Mammary epithelial cell (primary cell): ENCODE measurements at regions of chr5 and their contacts with region 1.

Region 1: DNA sequence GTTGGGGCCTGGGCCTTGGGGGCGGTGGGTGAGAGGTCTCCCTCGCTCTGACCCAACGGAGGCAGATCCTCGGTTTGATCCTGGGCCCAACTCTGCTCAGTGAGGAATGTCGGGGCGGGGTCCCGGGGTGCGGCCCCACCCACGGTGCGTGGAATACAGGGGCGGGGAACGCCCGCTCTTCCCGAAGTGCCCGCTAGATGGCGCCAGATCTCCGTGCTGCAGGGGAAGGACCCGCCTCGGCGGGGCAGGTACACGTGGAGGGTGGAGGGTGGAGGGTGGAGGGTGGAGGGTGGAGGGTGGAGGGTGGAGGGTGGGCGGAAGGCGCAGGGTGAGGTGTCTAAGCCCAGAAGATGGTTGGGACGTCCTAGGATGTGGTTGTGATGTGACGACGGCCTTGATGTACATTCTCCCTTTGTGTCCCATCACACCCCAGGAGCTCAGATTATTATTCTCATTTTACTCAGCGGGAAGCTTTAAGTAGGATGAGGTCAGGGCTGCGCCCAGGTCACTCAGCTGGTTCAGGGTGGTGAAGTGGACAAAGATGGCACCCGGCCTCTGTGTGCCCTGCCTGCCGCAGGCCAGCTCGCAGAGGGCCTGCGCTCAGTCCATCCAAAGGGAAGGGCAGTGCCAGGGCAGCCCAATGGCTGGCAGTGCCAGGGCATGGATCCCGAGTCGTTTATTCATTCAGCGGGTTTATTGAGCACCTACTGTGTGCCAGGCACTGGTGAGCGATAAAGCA is 9.4 kb upstream of the RPS14 start:
- DNase-seq: peak; percentile 39
- H3K4me3 ChIP-seq: peak overlapping the region in 1 of 3 experiments; percentile 9
- H3K27ac ChIP-seq: no peak overlapping the region
- H3K4me1 ChIP-seq: peaks cover 7% of the 10 kb centered on the region
- H3K27me3 ChIP-seq: no peaks in the 10 kb centered on the region
- CTCF ChIP-seq: peak; percentile 58 to 84

Region 2: GRCh38 chr5:150469718-150470469 is 10.9 kb after region 1 on chr5:
- CTCF ChIA-PET with region 1: interaction called, 26 read pairs
- dilution Hi-C with region 1: no loop called
- in situ Hi-C with region 1: no loop called
- intact Hi-C with region 1: loop called (anchors 1 kb)
- DNase-seq: peak; percentile 80
- H3K4me3 ChIP-seq: no peak overlapping the region
- H3K27ac ChIP-seq: no peak overlapping the region
- H3K4me1 ChIP-seq: peaks cover 38% of the 10 kb centered on the region
- H3K27me3 ChIP-seq: no peaks in the 10 kb centered on the region
- CTCF ChIP-seq: no peak

Region 3: GRCh38 chr5:150523472-150524350 is 64.7 kb after region 1 on chr5:
- CTCF ChIA-PET with region 1: no interaction called
- dilution Hi-C with region 1: loop called (anchors 5 kb)
- in situ Hi-C with region 1: no loop called
- intact Hi-C with region 1: loop called (anchors 1 kb)
- DNase-seq: peak; percentile 39
- H3K4me3 ChIP-seq: no peak overlapping the region
- H3K27ac ChIP-seq: no peak overlapping the region
- H3K4me1 ChIP-seq: peaks cover 42% of the 10 kb centered on the region
- H3K27me3 ChIP-seq: no peaks in the 10 kb centered on the region
- CTCF ChIP-seq: peak; percentile 44 to 59

Region 4: DNA sequence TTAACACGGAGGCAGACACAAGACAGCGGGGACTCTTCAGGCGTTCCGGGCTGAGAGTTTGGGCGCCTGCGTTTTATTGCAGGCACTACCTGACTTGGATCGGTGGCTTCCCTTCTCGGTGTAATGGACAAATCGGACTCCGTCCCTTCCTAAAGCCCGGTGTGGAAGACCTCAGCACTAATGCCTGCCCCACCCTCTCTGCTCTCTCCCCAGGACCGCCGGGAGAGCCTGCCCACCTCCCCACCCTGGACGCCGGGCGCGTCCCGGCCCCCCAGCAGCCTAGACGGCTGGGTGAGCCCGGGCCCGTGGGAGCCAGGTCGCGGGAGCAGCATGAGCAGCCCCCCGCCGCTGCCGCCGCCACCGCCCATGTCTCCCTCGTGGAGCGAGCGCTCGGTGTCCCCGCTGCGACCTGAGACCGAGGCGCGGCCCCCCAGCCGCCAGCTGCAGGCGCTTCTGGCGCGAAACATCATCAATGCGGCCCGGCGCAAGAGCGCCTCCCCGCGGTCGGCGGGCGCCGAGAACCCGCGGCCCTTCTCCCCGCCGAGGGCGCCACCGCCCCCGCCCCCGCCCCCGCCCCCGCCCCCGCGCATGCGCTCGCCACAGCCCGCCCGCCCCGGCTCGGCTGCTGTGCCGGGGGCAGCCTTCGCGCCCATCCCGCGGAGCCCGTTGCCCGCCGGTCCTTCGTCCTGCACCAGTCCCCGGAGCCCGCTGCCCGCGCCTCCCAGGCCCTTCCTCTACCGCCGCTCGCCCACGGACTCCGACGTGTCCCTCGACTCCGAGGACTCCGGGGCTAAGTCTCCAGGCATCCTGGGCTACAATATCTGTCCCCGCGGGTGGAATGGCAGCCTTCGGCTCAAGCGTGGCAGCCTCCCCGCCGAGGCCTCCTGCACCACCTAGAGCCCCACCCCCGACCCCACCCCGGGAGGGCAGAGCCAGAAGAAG is 197.5 kb after region 1 on chr5:
- CTCF ChIA-PET with region 1: interaction called, 6 read pairs
- dilution Hi-C with region 1: loop called (anchors 5 kb)
- in situ Hi-C with region 1: loop called (anchors 25 kb)
- intact Hi-C with region 1: loop called (anchors 1 kb)
- DNase-seq: no peak
- H3K4me3 ChIP-seq: peak overlapping the region; percentile 44 to 58 (median 54)
- H3K27ac ChIP-seq: no peak overlapping the region
- H3K4me1 ChIP-seq: no peaks in the 10 kb centered on the region
- H3K27me3 ChIP-seq: no peaks in the 10 kb centered on the region
- CTCF ChIP-seq: peak; percentile 38 to 62

Region 5: GRCh38 chr5:150846654-150847333 is 387.8 kb after region 1 on chr5:
- CTCF ChIA-PET with region 1: no interaction called
- dilution Hi-C with region 1: no loop called
- in situ Hi-C with region 1: loop called in 1 of 2 experiments (anchors 25 kb)
- intact Hi-C with region 1: loop called (anchors 1 kb)
- DNase-seq: peak; percentile 73
- H3K4me3 ChIP-seq: no peak overlapping the region
- H3K27ac ChIP-seq: no peak overlapping the region
- H3K4me1 ChIP-seq: no peaks in the 10 kb centered on the region
- H3K27me3 ChIP-seq: no peaks in the 10 kb centered on the region
- CTCF ChIP-seq: peak; percentile 56 to 66